WTC11 (cell line): ENCODE measurements at regions of chr7 and their contacts with region 1.

Region 1: GRCh38 chr7:151847681-151848081 is 29.2 kb downstream of the PRKAG2 start:
- DNase-seq: no peak
- ATAC-seq: no peak
- H3K4me3 Mint-ChIP-seq: no peak overlapping the region
- H3K27ac Mint-ChIP-seq: no peak overlapping the region
- H3K4me1 Mint-ChIP-seq: 0 out of 2 replicates have a peak, but pooled peaks cover 2% of the 10 kb centered on the region
- H3K27me3 Mint-ChIP-seq: no peaks in the 10 kb centered on the region
- CTCF ChIP-seq: no peak

Region 2: GRCh38 chr7:151795168-151795811 is 52.4 kb before region 1 on chr7:
- CTCF ChIA-PET with region 1: no interaction called
- POLR2A ChIA-PET with region 1: no interaction called
- DNase-seq: peak; percentile 9
- ATAC-seq: no peak
- H3K4me3 Mint-ChIP-seq: no peak overlapping the region
- H3K27ac Mint-ChIP-seq: no peak overlapping the region
- H3K4me1 Mint-ChIP-seq: peaks cover 25% of the 10 kb centered on the region
- H3K27me3 Mint-ChIP-seq: no peaks in the 10 kb centered on the region
- CTCF ChIP-seq: no peak

Region 3: GRCh38 chr7:151837285-151838096 is 10.2 kb before region 1 on chr7:
- CTCF ChIA-PET with region 1: no interaction called
- POLR2A ChIA-PET with region 1: interaction called, 11 read pairs
- DNase-seq: no peak
- ATAC-seq: peak; percentile 72
- H3K4me3 Mint-ChIP-seq: no peak overlapping the region
- H3K27ac Mint-ChIP-seq: peak overlapping the region; percentile 19; the same call in 1 of the 2 replicates
- H3K4me1 Mint-ChIP-seq: peaks cover 25% of the 10 kb centered on the region
- H3K27me3 Mint-ChIP-seq: no peaks in the 10 kb centered on the region
- CTCF ChIP-seq: no peak

Region 4: DNA sequence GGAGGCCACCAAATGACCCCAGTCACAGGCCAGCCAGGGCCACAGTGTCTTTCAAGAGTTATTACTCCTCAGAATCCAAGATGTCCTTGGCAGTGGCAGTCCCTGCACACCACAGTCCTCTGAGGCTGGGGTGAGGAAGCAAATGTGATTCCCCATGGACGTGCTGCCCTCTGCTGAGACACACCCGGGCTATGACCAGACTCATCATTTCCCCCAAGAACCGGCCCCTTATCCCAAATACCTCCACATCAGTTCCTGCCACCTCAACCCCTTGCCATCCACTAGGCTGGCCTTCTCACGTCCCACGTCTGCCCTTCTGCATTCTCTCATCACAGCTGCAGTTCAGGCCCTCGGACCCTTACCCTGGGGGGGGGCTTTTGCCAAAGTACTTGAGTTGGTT is 24.2 kb after region 1 on chr7:
- CTCF ChIA-PET with region 1: no interaction called
- POLR2A ChIA-PET with region 1: no interaction called
- DNase-seq: no peak
- ATAC-seq: no peak
- H3K4me3 Mint-ChIP-seq: no peak overlapping the region
- H3K27ac Mint-ChIP-seq: no peak overlapping the region
- H3K4me1 Mint-ChIP-seq: peaks cover 25% of the 10 kb centered on the region
- H3K27me3 Mint-ChIP-seq: peaks cover 11% of the 10 kb centered on the region
- CTCF ChIP-seq: no peak